Activated B cell treated with CpG ODN at 0.5 μM for 24 hours (primary cell): ENCODE measurements at regions of chr21 and their contacts with region 1.

Region 1: GRCh38 chr21:41816220-41817165 is 49.6 kb upstream of the RIPK4 start:
- DNase-seq: peak; percentile 53
- ATAC-seq: peak; percentile 94
- H3K4me3 Mint-ChIP-seq: no peak overlapping the region
- H3K27ac Mint-ChIP-seq: no peak overlapping the region
- H3K4me1 Mint-ChIP-seq: peaks cover 8% of the 10 kb centered on the region
- H3K27me3 Mint-ChIP-seq: no peaks in the 10 kb centered on the region
- CTCF ChIP-seq: no peak

Region 2: GRCh38 chr21:41121785-41122421 is 694.6 kb before region 1 on chr21:
- CTCF ChIA-PET with region 1: no interaction called
- POLR2A ChIA-PET with region 1: no interaction called
- intact Hi-C with region 1: loop called (anchors 2 kb)
- DNase-seq: peak; percentile 41
- ATAC-seq: peak; percentile 31
- H3K4me3 Mint-ChIP-seq: no peak overlapping the region
- H3K27ac Mint-ChIP-seq: no peak overlapping the region
- H3K4me1 Mint-ChIP-seq: no peaks in the 10 kb centered on the region
- H3K27me3 Mint-ChIP-seq: peaks cover 5% of the 10 kb centered on the region
- CTCF ChIP-seq: no peak

Region 3: GRCh38 chr21:41217671-41218660 is 598.5 kb before region 1 on chr21:
- CTCF ChIA-PET with region 1: no interaction called
- POLR2A ChIA-PET with region 1: no interaction called
- intact Hi-C with region 1: no loop called
- DNase-seq: no peak
- ATAC-seq: no peak
- H3K4me3 Mint-ChIP-seq: no peak overlapping the region
- H3K27ac Mint-ChIP-seq: no peak overlapping the region
- H3K4me1 Mint-ChIP-seq: peaks cover 18% of the 10 kb centered on the region
- H3K27me3 Mint-ChIP-seq: no peaks in the 10 kb centered on the region
- CTCF ChIP-seq: no peak

Region 4: DNA sequence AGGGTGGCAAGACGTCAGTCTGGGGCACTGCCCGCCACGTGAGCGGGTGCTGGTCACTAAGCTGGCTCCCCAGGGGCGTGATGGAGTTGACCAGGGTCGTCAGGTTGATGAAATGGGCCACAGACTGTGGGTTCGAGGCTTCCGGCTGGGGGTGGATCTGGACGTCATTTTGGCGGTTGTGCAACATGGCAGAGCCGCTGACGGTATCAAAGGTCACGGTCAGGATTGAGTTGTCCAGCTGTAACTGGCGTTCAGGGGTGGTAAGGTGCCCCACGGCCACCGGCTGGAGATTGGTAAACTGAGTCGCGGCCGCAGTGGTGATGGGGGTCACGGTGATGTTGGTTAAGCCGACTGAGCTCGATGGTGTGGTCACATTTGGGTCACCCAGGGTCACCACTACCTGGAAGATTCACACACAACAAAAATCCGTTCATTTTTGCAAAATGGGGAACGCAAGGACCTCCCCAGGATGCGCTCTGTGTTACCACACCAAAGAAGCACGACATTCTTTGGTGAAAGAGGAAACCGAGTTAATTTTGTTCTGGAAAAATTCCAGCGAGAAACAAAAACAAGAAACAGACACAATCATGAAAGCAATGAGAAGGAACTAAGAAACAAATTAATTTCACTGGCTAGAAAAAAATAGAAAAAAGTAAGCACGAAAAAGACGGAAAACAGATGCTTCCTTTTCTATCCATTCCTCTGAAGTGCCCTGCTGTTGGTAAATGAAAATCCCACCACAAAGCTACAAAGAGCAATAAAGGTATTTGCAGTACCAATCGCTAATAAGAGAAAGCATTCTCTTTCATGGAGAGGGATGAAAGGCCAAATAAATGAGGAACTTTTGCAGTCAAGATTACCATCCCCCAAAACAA is 14.9 kb before region 1 on chr21:
- CTCF ChIA-PET with region 1: no interaction called
- POLR2A ChIA-PET with region 1: no interaction called
- intact Hi-C with region 1: no loop called
- DNase-seq: no peak
- ATAC-seq: no peak
- H3K4me3 Mint-ChIP-seq: no peak overlapping the region
- H3K27ac Mint-ChIP-seq: no peak overlapping the region
- H3K4me1 Mint-ChIP-seq: no peaks in the 10 kb centered on the region
- H3K27me3 Mint-ChIP-seq: no peaks in the 10 kb centered on the region
- CTCF ChIP-seq: no peak

Region 5: DNA sequence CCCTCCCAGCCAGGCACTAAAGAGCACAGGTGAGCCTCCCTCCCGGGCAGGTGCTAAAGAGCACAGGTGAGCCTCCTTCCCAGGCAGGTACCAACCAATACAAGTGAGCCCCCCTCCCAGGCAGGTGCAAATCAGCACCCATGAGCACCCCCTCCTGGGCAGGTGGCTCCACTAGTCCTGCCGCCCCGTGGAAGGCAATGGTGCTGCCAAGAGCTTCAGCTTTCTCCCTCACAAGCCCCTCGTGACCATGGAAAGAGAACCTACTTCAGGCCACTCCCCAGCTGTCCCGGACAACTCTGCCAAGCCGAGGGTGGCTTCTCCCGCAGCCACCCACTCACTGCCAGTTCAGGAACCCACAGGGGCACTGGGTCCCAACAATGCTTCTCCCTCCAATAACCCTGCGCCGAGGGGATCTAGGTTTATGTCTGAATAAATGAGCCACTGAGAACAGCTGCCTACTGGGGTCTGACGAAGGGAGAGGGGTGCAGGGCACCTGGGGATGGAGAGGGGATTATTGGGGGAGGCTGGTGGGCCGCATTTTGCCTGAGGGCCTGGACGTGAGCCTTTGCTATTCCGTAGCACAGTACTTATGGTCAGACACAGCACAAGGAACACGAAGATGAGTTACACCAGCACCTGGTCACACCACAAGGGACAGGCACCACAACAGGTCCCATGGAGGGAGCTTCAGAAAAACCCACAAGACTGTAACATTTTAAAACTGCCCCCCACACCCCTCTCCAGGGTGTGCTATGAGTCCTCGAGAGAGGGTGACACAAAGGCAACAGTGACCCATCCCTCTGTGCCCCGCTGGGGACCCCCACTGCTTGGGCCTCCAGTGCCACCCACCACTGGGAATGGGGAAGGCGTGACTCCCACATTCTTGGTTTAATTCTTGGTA is 16.4 kb after region 1 on chr21:
- CTCF ChIA-PET with region 1: interaction called, 10 read pairs
- POLR2A ChIA-PET with region 1: interaction called, 3 read pairs
- intact Hi-C with region 1: no loop called
- DNase-seq: no peak
- ATAC-seq: peak; percentile 67
- H3K4me3 Mint-ChIP-seq: peak overlapping the region; percentile 44
- H3K27ac Mint-ChIP-seq: peak overlapping the region; percentile 20
- H3K4me1 Mint-ChIP-seq: peaks cover 45% of the 10 kb centered on the region
- H3K27me3 Mint-ChIP-seq: no peaks in the 10 kb centered on the region
- CTCF ChIP-seq: no peak

Region 6: GRCh38 chr21:41895643-41896493 is 79.4 kb after region 1 on chr21:
- CTCF ChIA-PET with region 1: interaction called, 10 read pairs
- POLR2A ChIA-PET with region 1: no interaction called
- intact Hi-C with region 1: loop called (anchors 1 kb)
- DNase-seq: no peak
- ATAC-seq: peak; percentile 93
- H3K4me3 Mint-ChIP-seq: peak overlapping the region; percentile 16
- H3K27ac Mint-ChIP-seq: peak overlapping the region; percentile 26
- H3K4me1 Mint-ChIP-seq: peaks cover 11% of the 10 kb centered on the region
- H3K27me3 Mint-ChIP-seq: no peaks in the 10 kb centered on the region
- CTCF ChIP-seq: no peak

Region 7: DNA sequence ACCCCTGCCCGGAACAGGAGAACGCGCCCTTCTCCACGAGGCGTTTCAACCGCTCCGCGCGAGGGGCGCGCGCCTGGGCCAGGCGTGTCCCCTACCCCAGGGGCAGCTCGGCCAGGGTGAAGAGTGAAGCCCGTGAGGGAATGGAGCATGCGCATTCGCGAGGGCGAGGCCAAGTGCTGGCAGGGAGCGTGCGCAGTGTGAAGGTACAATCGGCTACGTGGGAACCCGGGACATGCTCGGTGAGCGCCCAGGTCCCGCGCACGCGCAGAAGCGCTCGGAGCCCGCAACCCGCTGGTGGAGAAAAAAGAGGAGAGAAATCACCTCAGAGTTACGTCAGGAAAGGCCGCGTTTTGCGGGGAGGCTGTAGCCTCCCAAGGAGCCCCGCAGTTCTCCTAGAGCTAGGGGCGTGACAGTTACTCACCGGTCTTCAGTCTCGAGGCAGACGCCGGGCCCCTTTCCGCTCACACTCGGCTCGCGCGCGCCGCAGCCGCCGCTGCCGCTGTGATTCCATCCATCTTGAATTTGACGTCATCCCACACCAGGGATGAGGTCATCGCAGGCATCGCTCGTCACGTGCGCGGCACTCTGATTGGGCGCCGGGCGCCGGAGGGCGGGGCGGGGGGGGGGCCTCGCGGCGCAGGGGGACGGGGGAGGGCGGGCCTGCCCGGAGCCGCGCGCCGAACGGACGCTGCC is 193.5 kb after region 1 on chr21 and contains the start of gene ZBTB21:
- CTCF ChIA-PET with region 1: interaction called, 5 read pairs
- POLR2A ChIA-PET with region 1: no interaction called
- intact Hi-C with region 1: loop called (anchors 2 kb)
- DNase-seq: peak; percentile 97
- ATAC-seq: peak; percentile 79
- H3K4me3 Mint-ChIP-seq: peak within 1 kb of the TSS; percentile 98
- H3K27ac Mint-ChIP-seq: peak within 1 kb of the TSS; percentile 100
- H3K4me1 Mint-ChIP-seq: peaks cover 36% of the 10 kb centered on the region
- H3K27me3 Mint-ChIP-seq: no peaks in the 10 kb centered on the region
- CTCF ChIP-seq: no peak
- total RNA-seq, gene ZBTB21: 24.2 and 25.4 TPM in 2 replicates

Region 8: DNA sequence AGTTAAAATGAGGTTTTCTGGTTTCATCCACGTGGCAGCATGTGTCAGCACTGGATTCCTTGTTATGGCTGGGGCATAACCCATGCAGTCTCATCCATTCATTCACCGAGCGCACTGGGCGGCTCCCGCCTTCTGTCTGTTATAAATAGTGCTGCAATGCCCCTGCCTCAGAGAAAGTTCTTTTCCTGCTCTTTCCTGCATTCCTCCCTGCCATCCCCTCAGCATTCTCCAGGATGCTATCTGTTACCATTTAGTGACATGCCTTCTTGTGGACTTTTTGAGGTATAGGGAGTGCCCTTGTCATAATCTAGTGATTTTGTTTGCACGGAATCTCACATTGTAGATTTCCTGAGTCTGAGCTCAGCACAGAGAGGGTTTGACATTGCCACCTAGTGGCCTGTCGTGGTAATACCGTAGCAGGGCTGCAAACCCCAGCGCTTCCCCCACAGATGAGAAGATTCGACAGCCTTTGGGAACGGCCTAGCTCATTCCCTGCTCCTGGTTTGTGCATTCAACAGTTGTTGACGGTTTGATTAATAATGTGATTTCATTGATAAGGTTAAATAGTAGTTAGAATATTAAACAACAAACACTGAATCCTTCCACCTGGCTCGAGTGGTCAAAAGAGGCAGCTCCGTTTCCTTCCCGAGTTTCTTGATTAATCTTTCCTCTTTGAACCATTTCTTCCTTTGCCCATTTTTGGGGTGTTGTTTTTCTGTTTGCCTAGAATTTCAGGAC is 300.9 kb after region 1 on chr21:
- CTCF ChIA-PET with region 1: interaction called, 102 read pairs
- POLR2A ChIA-PET with region 1: interaction called, 6 read pairs
- intact Hi-C with region 1: loop called (anchors 1 kb)
- DNase-seq: peak; percentile 61
- ATAC-seq: peak; percentile 85
- H3K4me3 Mint-ChIP-seq: peak overlapping the region; percentile 37
- H3K27ac Mint-ChIP-seq: no peak overlapping the region
- H3K4me1 Mint-ChIP-seq: peaks cover 48% of the 10 kb centered on the region
- H3K27me3 Mint-ChIP-seq: peaks cover 16% of the 10 kb centered on the region
- CTCF ChIP-seq: peak; percentile 70